ENCODE measurements at regions of chr1 and their contacts with region 1.

Region 1: DNA sequence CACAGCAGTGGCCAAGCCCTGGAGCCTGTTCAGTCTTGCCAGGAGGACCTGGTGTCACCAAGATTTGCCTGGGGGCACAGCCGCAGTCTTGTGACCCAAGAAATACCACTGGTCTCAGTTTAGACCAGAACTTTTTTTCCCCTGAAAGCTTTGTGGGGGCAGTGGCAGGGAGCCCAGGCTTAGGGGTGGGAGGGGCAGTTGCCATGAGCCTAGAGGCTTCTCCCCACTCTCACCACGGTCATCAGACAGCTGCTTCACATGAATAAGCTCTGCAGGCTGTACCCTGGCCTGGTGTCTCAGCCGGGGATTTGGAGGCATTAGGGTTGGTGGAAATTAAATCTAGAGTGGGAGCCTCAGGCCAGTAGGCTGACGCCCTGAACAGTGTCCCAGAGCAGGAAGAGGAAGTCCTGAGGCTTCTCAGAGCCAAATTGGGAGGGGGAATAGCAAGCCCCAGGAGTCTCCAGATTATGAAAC is 73.7 kb downstream of the SLC16A1 start:
- DNase-seq: no peak
- H3K4me3 ChIP-seq: no peak overlapping the region
- H3K27ac ChIP-seq: no peak overlapping the region
- H3K4me1 ChIP-seq: peaks cover 5% of the 10 kb centered on the region
- H3K27me3 ChIP-seq: no peaks in the 10 kb centered on the region
- CTCF ChIP-seq: no peak
- POLR2A ChIP-seq: no peak

Region 2: GRCh38 chr1:112955781-112956543 is 73.7 kb after region 1 on chr1 and contains the start of gene SLC16A1:
- intact Hi-C with region 1: loop called (anchors 10 kb)
- DNase-seq: peak in 1 of 2 donors; percentile 93
- H3K4me3 ChIP-seq: peak within 1 kb of the TSS; percentile 66 to 93
- H3K27ac ChIP-seq: peak within 1 kb of the TSS; percentile 92
- H3K4me1 ChIP-seq: peaks cover 57% of the 10 kb centered on the region
- H3K27me3 ChIP-seq: no peaks in the 10 kb centered on the region
- CTCF ChIP-seq: no peak
- POLR2A ChIP-seq: peak; percentile 68 to 80
- total RNA-seq, gene SLC16A1: 12.8 TPM

Region 3: GRCh38 chr1:113042285-113043143 is 160.2 kb after region 1 on chr1:
- intact Hi-C with region 1: loop called (anchors 10 kb)
- DNase-seq: no peak
- H3K4me3 ChIP-seq: no peak overlapping the region
- H3K27ac ChIP-seq: no peak overlapping the region
- H3K4me1 ChIP-seq: peaks cover 13% of the 10 kb centered on the region
- H3K27me3 ChIP-seq: no peaks in the 10 kb centered on the region
- CTCF ChIP-seq: peak; percentile 33 to 62 (median 59)
- POLR2A ChIP-seq: no peak

Measured in vagina (tissue), 2 donors.